Left cardiac atrium (tissue), 4 donors: ENCODE measurements at regions of chr4 and their contacts with region 1.

Region 1: GRCh38 chr4:2418650-2419571 is at the start of gene CFAP99:
- DNase-seq: peak; percentile 99
- ATAC-seq: peak; percentile 96 to 97
- total RNA-seq, gene CFAP99: not detected

Region 2: GRCh38 chr4:1711571-1712215 is 707.2 kb before region 1 on chr4:
- intact Hi-C with region 1: no loop called
- DNase-seq: peak; percentile 63
- ATAC-seq: peak; percentile 34 to 49

Region 3: DNA sequence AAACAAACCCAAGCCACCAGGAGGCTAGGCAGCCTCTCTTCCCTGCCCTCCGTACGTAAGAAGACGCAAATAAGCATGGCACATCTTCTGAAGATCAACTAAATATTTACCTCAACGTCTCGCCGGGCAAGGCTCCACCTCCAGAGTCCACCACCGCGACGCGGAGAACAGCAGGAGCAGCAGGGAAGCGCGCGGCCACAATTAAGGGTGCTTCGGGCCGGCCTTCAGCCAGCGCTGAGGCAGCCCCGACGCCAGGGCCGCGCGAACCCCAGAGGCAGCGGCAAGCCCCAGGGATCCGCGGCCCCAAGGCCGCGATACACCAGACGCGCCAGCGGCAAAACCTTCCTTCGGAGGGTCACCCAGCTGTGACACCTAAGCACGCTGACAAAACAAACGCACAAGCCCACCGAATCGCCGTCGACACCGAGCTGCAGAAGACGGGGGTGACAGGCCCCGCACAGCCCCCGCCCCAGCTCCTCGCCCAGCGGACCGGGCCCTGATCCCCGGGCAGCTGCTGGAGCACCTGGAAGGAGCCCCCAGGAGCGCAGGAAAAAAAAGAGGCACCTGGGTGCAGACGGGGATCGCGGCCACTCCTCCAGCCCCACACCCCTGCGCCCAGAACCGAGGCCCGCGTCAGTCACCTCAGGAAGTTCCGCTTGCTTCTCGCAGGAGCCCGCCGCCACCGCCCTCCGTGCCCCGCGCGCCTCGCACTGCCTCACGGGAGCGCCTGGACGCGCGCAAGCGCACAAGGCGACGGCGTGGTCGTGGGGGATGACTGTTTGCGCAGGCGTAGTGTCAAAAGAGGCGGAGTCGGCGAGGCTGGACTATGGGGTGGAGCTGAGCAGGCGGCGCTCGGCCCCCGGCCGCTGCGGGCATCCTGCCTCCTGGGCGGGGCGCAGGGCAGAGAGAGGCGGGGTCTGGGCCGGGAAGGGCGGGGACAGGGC is 177.2 kb before region 1 on chr4 and contains the starts of genes HAUS3 and POLN:
- intact Hi-C with region 1: loop called in 1 of 2 experiments (anchors 10 kb)
- DNase-seq: peak; percentile 98
- ATAC-seq: peak; percentile 99
- total RNA-seq, gene HAUS3: 6.7 to 7.3 TPM
- total RNA-seq, gene POLN: 2.4 to 6.3 TPM

Region 4: GRCh38 chr4:2262143-2262943 is 156.6 kb before region 1 on chr4:
- intact Hi-C with region 1: loop called in 1 of 2 experiments (anchors 10 kb)
- DNase-seq: peak; percentile 100
- ATAC-seq: peak; percentile 94 to 95

Region 5: GRCh38 chr4:2468445-2469192 is 49.7 kb after region 1 on chr4 and contains the start of gene RNF4:
- intact Hi-C with region 1: no loop called
- DNase-seq: peak; percentile 97
- ATAC-seq: peak; percentile 97
- total RNA-seq, gene RNF4: 22.5 to 37.0 TPM

Region 6: DNA sequence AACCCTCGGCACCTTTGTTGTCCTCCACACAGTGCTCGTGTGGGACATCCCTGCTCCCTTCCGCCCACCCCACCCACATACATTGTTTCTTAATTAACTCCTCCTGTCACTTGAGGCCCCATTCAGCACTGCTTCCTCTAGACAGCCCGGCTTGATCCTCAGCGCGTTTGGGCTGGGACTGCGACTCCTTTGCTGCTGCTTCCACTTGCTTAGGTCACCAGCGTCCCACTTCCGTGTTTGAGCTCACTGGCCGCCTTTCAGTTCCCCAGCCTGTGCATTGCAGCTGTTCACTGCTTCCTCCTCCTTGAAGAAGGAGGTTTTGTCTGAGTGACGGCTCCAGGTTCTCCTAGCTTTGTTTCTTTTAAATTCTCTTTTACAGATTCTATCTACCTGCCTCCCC is 66.1 kb after region 1 on chr4:
- intact Hi-C with region 1: no loop called
- DNase-seq: peak; percentile 82
- ATAC-seq: peak; percentile 78 to 87